ENCODE measurements at regions of chr21 and their contacts with region 1.

Region 1: DNA sequence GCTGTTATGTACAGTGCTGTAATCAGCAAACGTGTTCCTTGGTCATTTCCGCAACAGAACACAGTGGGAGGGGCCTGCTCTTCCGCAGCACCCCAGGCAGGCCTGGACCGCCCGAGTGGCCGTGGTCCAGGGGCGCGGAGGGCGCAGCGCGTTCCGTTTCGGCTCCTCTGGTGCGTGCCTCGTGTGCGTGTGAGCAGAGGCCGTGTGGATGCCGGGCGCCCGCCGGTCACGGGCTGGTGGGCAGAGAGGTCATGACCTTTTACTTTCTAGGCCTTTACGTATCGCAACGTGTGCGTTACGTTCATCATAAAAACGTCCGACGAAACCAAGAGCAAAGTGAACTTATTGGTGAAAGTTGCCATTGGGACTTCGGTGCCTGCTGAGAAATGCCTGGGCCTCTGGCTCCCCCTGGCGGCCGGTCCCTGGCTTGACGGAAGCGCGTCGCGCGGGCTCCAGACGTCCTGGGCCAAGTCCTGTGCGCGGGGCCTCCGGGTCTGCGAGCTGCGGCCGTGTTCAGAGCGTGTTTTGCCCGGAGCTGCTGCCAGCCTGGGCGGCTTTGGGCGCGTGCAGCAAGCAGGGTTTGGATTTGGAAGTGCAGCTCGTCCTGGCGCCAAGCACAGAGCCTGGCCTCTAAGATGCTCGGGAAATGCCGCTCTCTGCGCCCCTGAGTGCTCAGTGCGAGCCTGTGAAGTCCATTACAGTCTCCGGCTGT is 34.4 kb downstream of the COL18A1 start:
- DNase-seq: peak; percentile 72 to 96
- H3K4me3 ChIP-seq: no peak overlapping the region
- H3K27ac ChIP-seq: no peak overlapping the region
- H3K4me1 ChIP-seq: peaks cover 0 to 8% (median 2%) of the 10 kb centered on the region in 4 experiments; a peak in 3 of 7 replicates
- H3K27me3 ChIP-seq: no peaks in the 10 kb centered on the region
- CTCF ChIP-seq: peak in 2 of 3 experiments; percentile 95 to 97; a peak in 3 of 4 replicates
- EP300 ChIP-seq: no peak
- POLR2A ChIP-seq: no peak
- RAD21 ChIP-seq: peak; percentile 98 to 99

Region 2: DNA sequence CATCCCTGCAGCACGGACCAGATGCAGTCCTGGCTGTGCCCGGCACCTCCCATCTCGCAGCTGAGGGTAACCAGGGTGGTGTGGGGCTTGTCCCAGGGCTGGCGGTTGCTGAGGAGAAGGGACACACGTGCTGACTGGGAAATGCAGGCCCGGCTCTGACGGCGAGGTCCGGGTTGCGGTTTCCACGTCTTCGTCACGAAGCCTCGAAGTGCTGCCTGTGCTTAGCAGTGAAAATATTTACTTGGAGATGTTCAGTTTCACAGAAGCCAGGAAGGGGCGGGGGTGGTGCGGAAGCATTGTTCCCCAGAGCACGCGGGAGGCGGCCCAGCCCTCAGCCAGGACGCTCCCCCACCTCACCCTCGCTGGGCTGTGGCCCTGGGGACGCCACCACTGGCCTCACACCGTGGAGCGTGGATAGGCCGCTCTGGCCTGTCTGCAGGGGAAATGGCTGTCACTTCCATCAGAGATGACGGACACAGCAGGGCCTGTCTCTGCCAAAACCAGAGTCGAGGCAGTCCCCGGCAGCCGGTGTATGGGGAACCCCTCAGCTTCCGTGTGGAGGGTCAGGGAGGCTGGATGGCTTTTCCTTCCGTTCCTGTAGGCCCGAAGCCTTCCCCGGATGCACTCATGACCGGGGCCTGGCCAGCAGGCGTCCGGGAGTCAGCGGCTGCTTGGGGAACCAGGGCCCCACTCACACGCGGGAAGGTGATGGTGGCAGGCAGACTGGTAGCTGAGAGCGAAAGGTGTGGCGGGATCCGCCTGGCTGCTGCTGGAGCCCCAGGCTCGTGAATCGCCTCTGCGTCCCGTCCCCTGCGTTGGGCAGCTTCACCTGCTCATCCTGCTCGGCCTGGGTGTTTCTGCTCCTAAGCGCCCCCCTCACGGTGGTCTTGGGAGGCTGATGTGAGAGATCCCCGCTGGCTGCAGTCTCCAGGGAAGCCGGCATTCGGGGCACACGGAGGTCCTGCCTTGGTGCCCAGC is 136.9 kb before region 1 on chr21:
- CTCF ChIA-PET with region 1: interaction called, 17 read pairs
- POLR2A ChIA-PET with region 1: interaction called, 3 read pairs
- DNase-seq: no peak
- H3K4me3 ChIP-seq: no peak overlapping the region
- H3K27ac ChIP-seq: no peak overlapping the region
- H3K4me1 ChIP-seq: peaks cover 0 to 3% (median 0%) of the 10 kb centered on the region in 4 experiments; a peak in 3 of 7 replicates
- H3K27me3 ChIP-seq: no peaks in the 10 kb centered on the region
- CTCF ChIP-seq: no peak
- EP300 ChIP-seq: no peak
- POLR2A ChIP-seq: no peak
- RAD21 ChIP-seq: no peak

Region 3: DNA sequence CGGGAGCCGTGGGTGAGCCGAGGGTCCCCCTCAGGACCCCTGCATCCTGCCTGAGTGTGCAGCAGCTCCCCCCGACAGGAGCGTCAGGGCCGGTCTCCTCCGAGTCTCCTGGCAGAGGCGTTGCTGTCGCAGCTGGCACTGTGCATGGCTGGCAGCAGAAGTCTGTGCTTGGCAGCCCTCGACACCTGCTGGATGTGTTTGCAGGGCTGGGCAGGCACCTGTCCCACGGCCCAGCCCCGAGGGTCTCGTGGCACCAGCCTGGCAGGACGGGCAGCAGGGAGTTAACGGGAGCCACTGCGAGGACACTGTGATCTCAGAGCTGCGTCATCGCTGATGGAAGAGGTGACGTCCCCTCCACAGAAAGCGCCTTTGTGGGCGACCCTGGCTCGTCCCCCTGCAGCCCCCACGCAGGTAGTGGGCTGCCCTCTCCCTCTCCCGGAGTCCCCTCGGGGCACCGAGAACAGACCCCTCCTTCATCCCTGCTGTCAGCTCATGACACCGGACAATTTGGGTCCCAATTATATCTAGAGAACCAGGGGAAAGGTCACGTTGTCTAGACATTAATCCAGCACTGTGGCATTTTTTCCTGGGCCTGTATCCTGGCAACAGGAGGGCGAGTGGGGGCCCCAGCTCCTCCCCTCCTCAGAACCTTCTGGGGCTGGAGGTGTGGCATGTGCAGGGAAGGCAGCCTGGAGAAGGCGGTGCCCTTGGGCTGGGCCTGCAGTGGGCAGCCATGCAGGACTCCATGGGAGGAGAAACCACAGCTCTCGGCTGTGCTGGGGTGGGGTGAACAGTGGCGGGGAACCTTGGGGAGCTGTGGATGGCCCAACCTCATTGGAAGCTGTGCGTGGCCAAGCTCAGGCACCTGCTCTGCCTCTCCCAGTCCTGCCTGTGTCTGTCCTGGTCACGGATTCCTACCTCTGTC is 19.0 kb before region 1 on chr21:
- CTCF ChIA-PET with region 1: interaction called, 4 read pairs
- POLR2A ChIA-PET with region 1: interaction called, 17 read pairs
- DNase-seq: no peak
- H3K4me3 ChIP-seq: no peak overlapping the region
- H3K27ac ChIP-seq: no peak overlapping the region
- H3K4me1 ChIP-seq: peaks cover 4 to 31% (median 23%) of the 10 kb centered on the region in 4 experiments
- H3K27me3 ChIP-seq: no peaks in the 10 kb centered on the region
- CTCF ChIP-seq: no peak
- EP300 ChIP-seq: no peak
- POLR2A ChIP-seq: no peak
- RAD21 ChIP-seq: no peak

Region 4: GRCh38 chr21:45451091-45451740 is 11.9 kb after region 1 on chr21:
- CTCF ChIA-PET with region 1: interaction called, 17 read pairs
- POLR2A ChIA-PET with region 1: interaction called, 4 read pairs
- DNase-seq: no peak
- H3K4me3 ChIP-seq: no peak overlapping the region
- H3K27ac ChIP-seq: no peak overlapping the region
- H3K4me1 ChIP-seq: no peaks in the 10 kb centered on the region; a peak in 1 of 7 replicates
- H3K27me3 ChIP-seq: no peaks in the 10 kb centered on the region
- CTCF ChIP-seq: no peak
- EP300 ChIP-seq: no peak
- POLR2A ChIP-seq: no peak
- RAD21 ChIP-seq: no peak

Measured in H1 (cell line).